ENCODE measurements at regions of chr17 and their contacts with region 1.

Region 1: DNA sequence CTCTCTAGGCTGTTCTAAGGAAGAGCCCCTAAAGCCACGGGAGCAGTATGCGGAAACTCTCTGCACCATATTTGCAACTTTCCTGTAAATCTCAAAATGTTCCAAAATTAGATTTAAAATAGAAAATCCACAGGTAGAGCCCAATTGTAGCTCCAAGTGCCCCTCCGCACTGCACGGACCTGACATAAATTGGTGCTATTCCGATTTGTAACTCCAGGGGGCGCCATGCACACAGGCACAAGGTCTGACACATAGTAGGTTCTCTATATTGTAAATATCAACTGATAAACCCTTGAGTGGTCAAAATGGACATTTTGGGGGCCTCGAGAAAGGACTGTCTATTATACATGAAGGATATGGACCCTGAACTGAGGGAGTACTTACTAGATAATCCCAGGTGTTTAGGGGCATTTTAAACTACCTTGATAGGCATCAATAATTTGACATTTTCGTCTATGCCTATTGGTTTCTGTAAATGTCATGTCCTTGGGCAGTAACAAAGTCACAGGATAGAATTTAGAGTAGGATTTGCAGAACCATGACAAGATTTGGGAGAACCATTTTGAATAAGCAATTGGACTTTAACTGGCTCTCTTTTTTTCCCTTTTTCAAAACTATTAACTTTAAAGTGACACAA is 36.6 kb upstream of the TMEM132E start:
- DNase-seq: no peak

Region 2: GRCh38 chr17:33779225-33779591 is 763.6 kb before region 1 on chr17:
- intact Hi-C with region 1: loop called in 1 of 2 experiments (anchors 5 kb)
- DNase-seq: no peak

Region 3: DNA sequence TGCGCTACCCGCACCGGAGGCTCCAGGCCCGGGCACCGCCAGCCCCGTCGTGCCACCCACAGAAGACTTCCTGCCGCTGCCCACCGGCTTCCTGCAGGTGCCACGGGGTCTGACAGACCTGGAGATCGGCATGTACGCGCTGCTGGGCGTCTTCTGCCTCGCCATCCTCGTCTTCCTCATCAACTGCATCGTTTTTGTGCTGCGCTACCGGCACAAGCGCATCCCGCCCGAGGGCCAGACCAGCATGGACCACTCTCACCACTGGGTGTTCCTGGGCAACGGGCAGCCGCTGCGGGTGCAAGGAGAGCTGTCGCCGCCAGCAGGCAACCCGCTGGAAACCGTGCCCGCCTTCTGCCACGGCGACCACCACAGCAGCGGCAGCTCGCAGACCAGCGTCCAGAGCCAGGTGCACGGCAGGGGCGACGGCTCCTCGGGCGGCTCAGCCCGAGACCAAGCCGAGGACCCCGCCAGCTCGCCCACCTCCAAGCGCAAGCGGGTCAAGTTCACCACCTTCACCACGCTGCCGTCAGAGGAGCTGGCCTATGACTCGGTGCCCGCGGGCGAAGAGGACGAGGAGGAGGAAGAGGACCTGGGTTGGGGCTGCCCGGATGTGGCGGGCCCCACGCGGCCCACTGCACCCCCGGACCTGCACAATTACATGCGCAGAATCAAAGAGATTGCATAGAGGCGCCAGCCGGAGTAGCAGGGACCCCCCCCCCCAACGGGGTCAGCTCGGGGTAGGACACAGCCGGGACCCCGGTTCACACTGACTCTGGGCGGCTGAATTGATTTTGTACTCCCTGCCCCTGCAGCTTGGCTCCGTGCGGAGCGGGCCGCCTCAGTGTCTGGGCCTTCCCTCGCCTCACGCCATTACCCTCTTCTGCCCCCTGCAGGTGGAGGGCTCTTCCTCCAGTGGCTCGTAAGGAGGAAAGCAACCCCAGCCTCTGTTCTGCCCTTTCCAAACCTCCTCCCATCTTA is 95.0 kb after region 1 on chr17:
- intact Hi-C with region 1: loop called (anchors 10 kb)
- DNase-seq: peak; percentile 91

Region 4: DNA sequence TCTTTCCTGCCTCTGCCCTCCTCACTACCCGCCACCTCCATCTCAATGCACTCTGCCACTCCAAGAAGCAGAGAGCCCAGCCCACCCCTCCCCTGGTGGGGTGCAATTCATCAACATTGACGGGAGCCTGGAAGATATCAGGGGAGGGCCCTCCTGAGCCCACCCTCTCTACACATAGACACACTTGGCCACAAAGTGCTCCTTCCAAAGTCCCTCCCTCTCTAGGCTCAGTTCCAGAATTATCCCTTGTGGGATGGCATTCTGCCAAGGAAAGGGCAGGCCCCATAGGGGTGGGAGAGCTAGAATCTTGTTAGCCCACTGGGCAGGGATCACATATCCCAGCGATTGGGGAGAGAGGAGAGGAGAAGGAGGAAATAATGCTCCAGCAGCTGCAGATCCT is 102.8 kb after region 1 on chr17:
- intact Hi-C with region 1: loop called in 1 of 2 experiments (anchors 10 kb)
- DNase-seq: no peak